Activated B cell treated with CpG ODN at 0.5 μM for 24 hours (primary cell): ENCODE measurements at regions of chr1 and their contacts with region 1.

Region 1: DNA sequence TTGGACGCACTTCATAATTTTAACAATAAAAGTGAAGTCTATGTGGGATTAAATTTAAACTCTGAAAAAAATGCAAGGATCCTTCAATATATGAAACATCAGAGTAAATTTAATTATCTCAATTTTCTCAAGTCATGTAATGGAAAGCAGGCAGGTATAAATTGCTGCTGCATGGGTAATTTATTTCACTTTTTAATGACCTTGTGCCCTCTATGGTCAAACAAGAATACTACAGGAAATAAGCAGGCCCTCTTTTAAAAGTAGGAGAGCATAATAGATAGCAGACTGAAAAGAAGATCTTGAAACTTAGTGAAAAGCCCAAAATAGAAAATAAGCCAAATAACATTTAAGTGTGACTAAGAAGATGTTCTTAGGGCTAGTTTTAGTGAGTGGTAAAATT is 22.9 kb downstream of the BCAS2 start:
- DNase-seq: no peak
- ATAC-seq: peak; percentile 59
- H3K4me3 Mint-ChIP-seq: no peak overlapping the region
- H3K27ac Mint-ChIP-seq: peak overlapping the region; percentile 62
- H3K4me1 Mint-ChIP-seq: peaks cover 34% of the 10 kb centered on the region
- H3K27me3 Mint-ChIP-seq: no peaks in the 10 kb centered on the region
- CTCF ChIP-seq: no peak

Region 2: GRCh38 chr1:113978863-113979702 is 579.5 kb before region 1 on chr1 and contains the start of gene OLFML3:
- CTCF ChIA-PET with region 1: interaction called, 3 read pairs
- POLR2A ChIA-PET with region 1: no interaction called
- intact Hi-C with region 1: loop called (anchors 1 kb)
- DNase-seq: no peak
- ATAC-seq: no peak
- H3K4me3 Mint-ChIP-seq: no peak within 1 kb of the TSS
- H3K27ac Mint-ChIP-seq: no peak within 1 kb of the TSS
- H3K4me1 Mint-ChIP-seq: peaks cover 14% of the 10 kb centered on the region
- H3K27me3 Mint-ChIP-seq: no peaks in the 10 kb centered on the region
- CTCF ChIP-seq: no peak
- total RNA-seq, gene OLFML3: 0.27 and 0.29 TPM in 2 replicates

Region 3: DNA sequence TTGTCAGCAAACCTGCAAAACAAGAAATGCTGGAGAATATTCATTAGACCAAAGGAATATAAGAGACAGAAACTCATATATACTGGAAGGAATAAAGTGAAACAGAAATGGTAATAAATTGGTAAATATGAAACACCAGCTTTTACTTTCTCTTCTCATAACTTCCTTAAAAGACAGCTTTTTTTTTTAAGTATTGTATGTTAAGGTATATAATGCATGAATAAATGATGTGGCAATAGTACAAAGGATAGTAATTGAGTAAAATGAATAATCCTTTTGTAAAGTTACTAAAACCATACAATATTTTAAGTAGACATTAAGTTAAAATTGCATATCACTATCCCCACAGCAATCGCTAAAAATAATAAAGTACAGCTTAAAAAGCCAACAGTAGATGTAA is 112.3 kb before region 1 on chr1:
- CTCF ChIA-PET with region 1: no interaction called
- POLR2A ChIA-PET with region 1: no interaction called
- intact Hi-C with region 1: loop called (anchors 10 kb)
- DNase-seq: no peak
- ATAC-seq: no peak
- H3K4me3 Mint-ChIP-seq: no peak overlapping the region
- H3K27ac Mint-ChIP-seq: no peak overlapping the region
- H3K4me1 Mint-ChIP-seq: peaks cover 6% of the 10 kb centered on the region
- H3K27me3 Mint-ChIP-seq: no peaks in the 10 kb centered on the region
- CTCF ChIP-seq: no peak